ENCODE measurements at regions of chr2 and their contacts with region 1.

Region 1: GRCh38 chr2:33583194-33583938 is 15.7 kb downstream of the FAM98A start:
- DNase-seq: peak in 6 of 9 donors; percentile 12 to 49 (median 36)
- ATAC-seq: peak; percentile 77
- H3K4me3 ChIP-seq: no peak overlapping the region
- H3K4me3 Mint-ChIP-seq: no peak overlapping the region
- H3K27ac ChIP-seq: no peak overlapping the region
- H3K27ac Mint-ChIP-seq: peak overlapping the region in 3 of 9 donors; percentile 47 to 61 (median 53)
- H3K4me1 ChIP-seq: peaks cover 0 to 5% of the 10 kb centered on the region in 2 donors
- H3K4me1 Mint-ChIP-seq: peaks cover 4 to 18% (median 10%) of the 10 kb centered on the region in 7 donors
- H3K27me3 ChIP-seq: no peaks in the 10 kb centered on the region
- H3K27me3 Mint-ChIP-seq: no peaks in the 10 kb centered on the region

Region 2: DNA sequence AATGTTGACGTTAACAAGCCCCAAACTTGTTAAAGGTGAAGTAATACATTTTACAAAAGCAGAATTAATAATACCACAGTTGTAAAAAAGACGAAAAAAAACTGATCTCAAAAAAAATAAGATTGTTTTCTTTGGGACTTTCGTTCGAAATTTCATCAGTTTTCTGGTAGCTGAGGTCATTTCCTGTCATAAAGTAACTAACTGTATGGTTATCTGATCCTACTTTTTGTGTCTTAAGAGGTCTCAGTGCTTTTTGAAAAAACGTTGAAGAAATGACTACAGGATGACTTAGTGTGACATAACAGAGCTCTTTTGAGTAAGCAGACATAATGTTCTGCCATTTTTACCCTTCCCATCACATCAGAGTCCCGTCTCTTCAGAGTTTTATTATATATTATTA is 1147.2 kb before region 1 on chr2:
- CTCF ChIA-PET with region 1: no interaction called
- POLR2A ChIA-PET with region 1: no interaction called
- intact Hi-C with region 1: no loop called
- DNase-seq: no peak
- ATAC-seq: no peak
- H3K4me3 ChIP-seq: no peak overlapping the region
- H3K4me3 Mint-ChIP-seq: no peak overlapping the region
- H3K27ac ChIP-seq: no peak overlapping the region
- H3K27ac Mint-ChIP-seq: no peak overlapping the region
- H3K4me1 ChIP-seq: no peaks in the 10 kb centered on the region
- H3K4me1 Mint-ChIP-seq: peaks cover 0 to 13% (median 4%) of the 10 kb centered on the region in 7 donors
- H3K27me3 ChIP-seq: no peaks in the 10 kb centered on the region
- H3K27me3 Mint-ChIP-seq: no peaks in the 10 kb centered on the region

Region 3: DNA sequence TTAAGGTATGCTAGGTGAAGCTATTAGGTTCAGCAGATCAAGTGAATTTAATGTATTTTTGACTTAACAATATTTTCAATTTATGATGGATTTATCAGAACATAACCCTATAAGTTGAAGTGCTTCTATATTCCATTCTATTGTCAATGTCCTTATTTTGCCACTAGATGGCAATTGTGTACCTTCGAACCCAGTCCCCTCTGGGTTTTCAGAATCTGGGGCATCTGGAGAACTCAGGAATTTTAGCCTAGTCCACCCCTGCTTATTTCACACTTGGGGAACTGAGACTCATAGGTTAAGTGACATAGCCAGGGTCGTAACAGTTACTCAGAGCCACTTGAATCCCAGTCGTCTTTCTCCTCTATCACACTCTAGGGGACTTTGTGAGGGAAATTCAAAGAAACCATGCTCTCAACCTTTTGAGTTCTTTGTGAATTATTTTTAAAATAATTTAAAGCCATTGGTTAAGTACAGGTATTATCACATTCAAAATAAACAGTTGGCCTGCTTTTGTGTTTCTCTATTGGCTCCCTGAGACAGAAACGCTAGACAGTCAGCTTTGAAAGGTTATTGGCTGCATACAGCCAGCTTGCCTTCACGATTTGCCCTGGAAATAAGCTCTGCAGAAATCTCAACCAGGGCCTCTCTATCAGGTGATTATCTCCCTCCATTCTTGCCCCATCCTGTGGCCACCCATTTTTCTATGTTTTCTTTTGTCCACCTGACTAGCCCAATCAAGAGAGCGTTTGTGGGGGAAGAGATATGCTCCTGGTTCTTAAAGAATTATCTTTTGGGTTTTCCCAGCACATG is 810.5 kb before region 1 on chr2:
- CTCF ChIA-PET with region 1: no interaction called
- POLR2A ChIA-PET with region 1: no interaction called
- intact Hi-C with region 1: loop called (anchors 2 to 5 kb)
- DNase-seq: no peak
- ATAC-seq: no peak
- H3K4me3 ChIP-seq: no peak overlapping the region
- H3K4me3 Mint-ChIP-seq: no peak overlapping the region
- H3K27ac ChIP-seq: no peak overlapping the region
- H3K27ac Mint-ChIP-seq: no peak overlapping the region
- H3K4me1 ChIP-seq: no peaks in the 10 kb centered on the region
- H3K4me1 Mint-ChIP-seq: no peaks in the 10 kb centered on the region
- H3K27me3 ChIP-seq: no peaks in the 10 kb centered on the region
- H3K27me3 Mint-ChIP-seq: no peaks in the 10 kb centered on the region

Region 4: GRCh38 chr2:33033606-33034081 is 549.7 kb before region 1 on chr2:
- CTCF ChIA-PET with region 1: no interaction called
- POLR2A ChIA-PET with region 1: no interaction called
- intact Hi-C with region 1: loop called in 1 of 2 experiments (anchors 5 kb)
- DNase-seq: no peak
- ATAC-seq: no peak
- H3K4me3 ChIP-seq: no peak overlapping the region
- H3K4me3 Mint-ChIP-seq: no peak overlapping the region
- H3K27ac ChIP-seq: no peak overlapping the region
- H3K27ac Mint-ChIP-seq: no peak overlapping the region
- H3K4me1 ChIP-seq: no peaks in the 10 kb centered on the region
- H3K4me1 Mint-ChIP-seq: no peaks in the 10 kb centered on the region
- H3K27me3 ChIP-seq: no peaks in the 10 kb centered on the region
- H3K27me3 Mint-ChIP-seq: peaks cover 0 to 30% (median 5%) of the 10 kb centered on the region in 5 donors

Region 5: DNA sequence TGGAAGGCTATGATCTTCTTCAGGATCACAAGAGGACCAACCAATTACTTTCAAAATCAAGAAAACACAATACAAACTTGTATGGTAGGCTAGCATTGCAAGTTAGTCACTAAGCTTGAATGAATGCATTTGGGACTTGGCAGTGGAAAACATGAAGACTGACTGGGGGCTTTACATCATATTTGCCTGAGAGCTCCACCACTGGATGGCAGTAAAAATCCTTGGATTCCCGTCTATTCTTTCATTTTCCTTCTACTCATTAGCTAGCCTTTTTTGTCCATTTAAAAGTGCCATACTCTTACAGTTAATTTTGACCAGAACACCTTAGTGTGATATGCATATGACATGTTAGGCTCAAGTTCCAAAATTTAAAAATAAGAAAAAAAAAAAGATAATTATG is 170.4 kb before region 1 on chr2:
- CTCF ChIA-PET with region 1: interaction called, 4 read pairs
- POLR2A ChIA-PET with region 1: no interaction called
- intact Hi-C with region 1: loop called in 1 of 2 experiments (anchors 1 kb)
- DNase-seq: no peak
- ATAC-seq: no peak
- H3K4me3 ChIP-seq: no peak overlapping the region
- H3K4me3 Mint-ChIP-seq: no peak overlapping the region
- H3K27ac ChIP-seq: no peak overlapping the region
- H3K27ac Mint-ChIP-seq: no peak overlapping the region
- H3K4me1 ChIP-seq: no peaks in the 10 kb centered on the region
- H3K4me1 Mint-ChIP-seq: peaks cover 0 to 1% (median 0%) of the 10 kb centered on the region in 7 donors
- H3K27me3 ChIP-seq: no peaks in the 10 kb centered on the region
- H3K27me3 Mint-ChIP-seq: peaks cover 5 to 11% (median 9%) of the 10 kb centered on the region in 5 donors

Region 6: GRCh38 chr2:33475224-33476130 is 107.9 kb before region 1 on chr2:
- CTCF ChIA-PET with region 1: interaction called, 3 read pairs
- POLR2A ChIA-PET with region 1: interaction called, 3 read pairs
- intact Hi-C with region 1: loop called (anchors 1 kb)
- DNase-seq: peak; percentile 61 to 89 (median 83)
- ATAC-seq: peak; percentile 86
- H3K4me3 ChIP-seq: peak overlapping the region; percentile 81
- H3K4me3 Mint-ChIP-seq: peak overlapping the region; percentile 88 to 99 (median 95)
- H3K27ac ChIP-seq: peak overlapping the region; percentile 91
- H3K27ac Mint-ChIP-seq: peak overlapping the region; percentile 95 to 100 (median 98)
- H3K4me1 ChIP-seq: peaks cover 9 to 11% of the 10 kb centered on the region in 2 donors
- H3K4me1 Mint-ChIP-seq: peaks cover 14 to 39% (median 32%) of the 10 kb centered on the region in 7 donors
- H3K27me3 ChIP-seq: no peaks in the 10 kb centered on the region
- H3K27me3 Mint-ChIP-seq: peaks cover 0 to 4% (median 0%) of the 10 kb centered on the region in 5 donors

Region 7: DNA sequence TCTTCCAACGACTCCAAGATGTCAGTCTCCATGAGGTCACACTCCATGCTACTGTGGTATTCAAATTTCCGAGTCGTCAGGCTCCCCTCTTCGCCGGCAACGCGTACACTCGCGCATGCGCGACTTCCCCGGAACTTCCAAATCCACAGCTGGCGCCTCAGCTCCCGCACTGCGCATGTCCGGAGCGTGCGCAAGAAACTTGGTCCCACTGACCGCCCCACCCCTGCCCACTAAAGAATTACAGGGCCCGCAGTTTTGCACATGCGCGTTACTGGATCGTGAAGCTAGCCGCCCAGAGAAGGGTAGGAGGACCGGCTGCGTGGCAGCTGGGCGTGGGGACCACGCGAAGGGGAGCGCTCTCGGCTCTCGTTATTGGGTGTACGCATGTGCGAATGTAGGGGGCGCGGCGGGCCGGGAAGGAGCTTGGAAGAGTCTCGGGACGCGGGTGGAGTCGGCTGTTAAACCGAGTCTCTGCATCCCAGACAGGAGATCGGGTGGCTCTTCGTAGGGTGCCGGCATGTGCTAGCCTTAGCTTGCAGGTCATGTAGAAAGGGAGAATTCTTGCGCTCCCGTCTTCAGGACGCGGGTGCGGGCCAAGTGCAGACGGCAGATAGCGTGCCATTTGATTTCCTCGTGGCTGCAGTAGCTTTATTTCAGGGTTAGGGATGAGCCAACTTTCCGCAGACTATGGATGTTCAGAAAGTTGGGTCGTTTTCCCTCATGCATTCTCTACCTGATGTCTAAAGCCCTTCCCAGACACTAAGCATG is 16.0 kb after region 1 on chr2 and contains the start of gene FAM98A:
- CTCF ChIA-PET with region 1: interaction called, 16 read pairs
- POLR2A ChIA-PET with region 1: interaction called, 7 read pairs
- intact Hi-C with region 1: no loop called
- DNase-seq: peak; percentile 96 to 98 (median 98)
- ATAC-seq: peak; percentile 96
- H3K4me3 ChIP-seq: peak within 1 kb of the TSS; percentile 92
- H3K4me3 Mint-ChIP-seq: peak within 1 kb of the TSS; percentile 91 to 99 (median 96)
- H3K27ac ChIP-seq: peak within 1 kb of the TSS; percentile 89
- H3K27ac Mint-ChIP-seq: peak within 1 kb of the TSS; percentile 86 to 97 (median 96)
- H3K4me1 ChIP-seq: peaks cover 10 to 14% of the 10 kb centered on the region in 2 donors
- H3K4me1 Mint-ChIP-seq: peaks cover 17 to 45% (median 33%) of the 10 kb centered on the region in 7 donors
- H3K27me3 ChIP-seq: no peaks in the 10 kb centered on the region
- H3K27me3 Mint-ChIP-seq: peaks cover 0 to 4% (median 0%) of the 10 kb centered on the region in 5 donors
- total RNA-seq, gene FAM98A: 16.8 to 36.0 (median 32.6) TPM

Region 8: GRCh38 chr2:34161549-34161948 is 578.2 kb after region 1 on chr2:
- CTCF ChIA-PET with region 1: no interaction called
- POLR2A ChIA-PET with region 1: no interaction called
- intact Hi-C with region 1: no loop called
- DNase-seq: no peak
- ATAC-seq: no peak
- H3K4me3 ChIP-seq: no peak overlapping the region
- H3K4me3 Mint-ChIP-seq: no peak overlapping the region
- H3K27ac ChIP-seq: no peak overlapping the region
- H3K27ac Mint-ChIP-seq: no peak overlapping the region
- H3K4me1 ChIP-seq: no peaks in the 10 kb centered on the region
- H3K4me1 Mint-ChIP-seq: no peaks in the 10 kb centered on the region
- H3K27me3 ChIP-seq: no peaks in the 10 kb centered on the region
- H3K27me3 Mint-ChIP-seq: peaks cover 0 to 2% (median 0%) of the 10 kb centered on the region in 5 donors